ENCODE measurements at regions of chr1 and their contacts with region 1.

Region 1: GRCh38 chr1:202926720-202927491 is at the start of gene KLHL12:
- DNase-seq: peak; percentile 97
- H3K4me3 ChIP-seq: peak within 1 kb of the TSS; percentile 33 to 99 (median 88)
- H3K27ac ChIP-seq: peak within 1 kb of the TSS; percentile 70
- H3K4me1 ChIP-seq: peaks cover 2% of the 10 kb centered on the region
- H3K27me3 ChIP-seq: no peaks in the 10 kb centered on the region
- CTCF ChIP-seq: peak; percentile 50 to 61
- POLR2A ChIP-seq: peak; percentile 93
- total RNA-seq, gene KLHL12: 22.8 and 25.2 TPM in 2 replicates

Region 2: GRCh38 chr1:202952818-202953217 is 25.9 kb after region 1 on chr1:
- CTCF ChIA-PET with region 1: no interaction called
- POLR2A ChIA-PET with region 1: no interaction called
- dilution Hi-C with region 1: no loop called
- intact Hi-C with region 1: loop called (anchors 1 kb)
- DNase-seq: peak; percentile 78
- H3K4me3 ChIP-seq: no peak overlapping the region
- H3K27ac ChIP-seq: peak overlapping the region; percentile 37
- H3K4me1 ChIP-seq: peaks cover 25% of the 10 kb centered on the region
- H3K27me3 ChIP-seq: no peaks in the 10 kb centered on the region
- CTCF ChIP-seq: no peak
- POLR2A ChIP-seq: no peak

Region 3: GRCh38 chr1:202957733-202958543 is 31.0 kb after region 1 on chr1 and contains the start of gene ADIPOR1:
- CTCF ChIA-PET with region 1: no interaction called
- POLR2A ChIA-PET with region 1: no interaction called
- dilution Hi-C with region 1: no loop called
- intact Hi-C with region 1: loop called (anchors 1 kb)
- DNase-seq: peak; percentile 85
- H3K4me3 ChIP-seq: peak within 1 kb of the TSS; percentile 79 to 99 (median 81)
- H3K27ac ChIP-seq: peak within 1 kb of the TSS; percentile 86
- H3K4me1 ChIP-seq: peaks cover 22% of the 10 kb centered on the region
- H3K27me3 ChIP-seq: no peaks in the 10 kb centered on the region
- CTCF ChIP-seq: no peak
- POLR2A ChIP-seq: peak; percentile 87
- total RNA-seq, gene ADIPOR1: 66.9 and 67.2 TPM in 2 replicates

Region 4: DNA sequence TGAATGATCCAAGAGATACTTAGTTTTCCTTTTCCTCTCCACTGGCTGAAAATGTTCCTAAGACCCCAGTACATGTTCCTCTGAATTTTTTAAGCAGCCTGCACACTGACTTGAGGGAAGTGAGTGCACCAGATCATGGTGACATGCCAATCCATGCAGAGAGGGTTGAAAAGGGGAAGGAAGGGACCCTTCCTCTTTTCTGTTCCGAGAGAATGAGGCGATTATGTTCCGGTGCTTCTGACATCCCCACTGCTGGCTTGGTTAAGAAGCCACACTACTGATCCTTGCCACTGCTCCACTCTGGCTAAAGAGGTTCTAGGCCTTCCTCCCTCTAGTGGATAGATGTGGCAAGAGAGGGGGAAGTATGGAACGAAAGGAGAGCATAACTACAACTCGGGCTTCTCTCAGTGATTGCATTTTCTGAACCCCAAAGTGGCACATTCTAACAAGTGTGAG is 42.0 kb after region 1 on chr1:
- CTCF ChIA-PET with region 1: interaction called, 4 read pairs
- POLR2A ChIA-PET with region 1: interaction called, 4 read pairs
- dilution Hi-C with region 1: no loop called
- intact Hi-C with region 1: loop called (anchors 2 kb)
- DNase-seq: peak; percentile 62
- H3K4me3 ChIP-seq: no peak overlapping the region
- H3K27ac ChIP-seq: no peak overlapping the region
- H3K4me1 ChIP-seq: peaks cover 19% of the 10 kb centered on the region
- H3K27me3 ChIP-seq: peaks cover 0 to 9% of the 10 kb centered on the region in 2 experiments
- CTCF ChIP-seq: peak; percentile 68 to 73
- POLR2A ChIP-seq: no peak

Region 5: GRCh38 chr1:202998836-202999750 is 72.2 kb after region 1 on chr1:
- CTCF ChIA-PET with region 1: interaction called, 5 read pairs
- POLR2A ChIA-PET with region 1: no interaction called
- dilution Hi-C with region 1: no loop called
- intact Hi-C with region 1: loop called (anchors 1 kb)
- DNase-seq: peak; percentile 69
- H3K4me3 ChIP-seq: no peak overlapping the region
- H3K27ac ChIP-seq: no peak overlapping the region
- H3K4me1 ChIP-seq: peaks cover 5% of the 10 kb centered on the region
- H3K27me3 ChIP-seq: peaks cover 16 to 27% of the 10 kb centered on the region in 2 experiments
- CTCF ChIP-seq: peak; percentile 66 to 72
- POLR2A ChIP-seq: no peak

Region 6: GRCh38 chr1:203006948-203007871 is 80.3 kb after region 1 on chr1 and contains the start of gene TMEM183A:
- CTCF ChIA-PET with region 1: interaction called, 4 read pairs
- POLR2A ChIA-PET with region 1: no interaction called
- dilution Hi-C with region 1: no loop called
- intact Hi-C with region 1: loop called (anchors 1 kb)
- DNase-seq: peak; percentile 96
- H3K4me3 ChIP-seq: peak within 1 kb of the TSS; percentile 53 to 92 (median 89)
- H3K27ac ChIP-seq: peak within 1 kb of the TSS; percentile 56
- H3K4me1 ChIP-seq: peaks cover 11% of the 10 kb centered on the region
- H3K27me3 ChIP-seq: no peaks in the 10 kb centered on the region
- CTCF ChIP-seq: no peak
- POLR2A ChIP-seq: peak; percentile 94
- total RNA-seq, gene TMEM183A: 59.4 and 65.5 TPM in 2 replicates

Measured in endothelial cell of umbilical vein (primary cell).